Activated T-helper 1 cell treated with anti-CD3 and anti-CD28 coated beads, Interleukin-12 subunit alpha, Interleukin-12 subunit beta, Interleukin-2, Interleukin-4 antibody, amounts not matched to agents 30 ng/mL and 10 ng/mL and 1 ng/mL, durations not matched to agents 14 hours and 24 hours and 36 hours (primary cell): ENCODE measurements at regions of chr15 and their contacts with region 1.

Region 1: DNA sequence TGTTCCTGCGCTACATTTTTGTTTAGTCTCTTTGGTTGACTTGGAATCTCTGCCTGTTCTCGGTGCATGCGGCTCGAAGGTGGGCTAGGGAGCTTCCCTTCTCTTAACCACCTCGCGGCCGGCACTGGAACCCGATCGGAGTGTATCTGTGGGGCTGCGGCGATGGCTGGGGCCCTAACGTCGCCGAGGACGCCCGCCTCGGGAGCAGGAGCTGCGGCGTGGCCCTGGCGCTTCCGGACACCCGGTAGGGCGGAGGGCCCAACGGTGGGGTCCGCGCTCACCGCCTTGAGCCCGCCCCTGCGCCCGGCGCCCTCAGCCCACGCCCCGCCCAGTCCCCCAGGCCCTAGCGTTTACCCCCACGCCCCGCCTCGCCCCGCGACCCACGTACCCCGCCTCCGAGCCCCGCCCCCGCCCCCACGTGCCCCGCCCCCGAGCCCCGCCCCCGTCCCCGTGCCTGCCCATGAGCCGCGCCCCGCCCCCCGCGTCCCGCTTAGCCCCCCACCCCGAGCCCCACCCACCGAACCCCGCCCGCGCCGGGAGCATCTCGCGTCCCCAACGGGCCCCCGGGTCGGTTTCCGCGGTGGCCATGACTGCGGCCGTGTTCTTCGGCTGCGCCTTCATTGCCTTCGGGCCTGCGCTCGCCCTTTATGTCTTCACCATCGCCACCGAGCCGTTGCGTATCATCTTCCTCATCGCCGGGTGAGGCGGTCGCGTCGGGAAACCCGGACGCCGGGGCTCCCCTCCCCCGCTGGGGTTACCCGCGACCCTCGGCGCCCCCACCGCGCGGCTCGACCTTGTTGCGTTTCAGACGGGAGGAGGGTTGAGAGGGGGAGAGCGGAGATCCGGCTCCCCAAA is at the start of gene APH1B:
- DNase-seq: peak; percentile 80
- H3K4me3 Mint-ChIP-seq: peak within 1 kb of the TSS; percentile 89
- H3K27ac Mint-ChIP-seq: peak within 1 kb of the TSS; percentile 92
- H3K4me1 Mint-ChIP-seq: peaks cover 37% of the 10 kb centered on the region
- H3K27me3 Mint-ChIP-seq: no peaks in the 10 kb centered on the region
- total RNA-seq, gene APH1B: 4.1 and 6.2 TPM in 2 replicates

Region 2: DNA sequence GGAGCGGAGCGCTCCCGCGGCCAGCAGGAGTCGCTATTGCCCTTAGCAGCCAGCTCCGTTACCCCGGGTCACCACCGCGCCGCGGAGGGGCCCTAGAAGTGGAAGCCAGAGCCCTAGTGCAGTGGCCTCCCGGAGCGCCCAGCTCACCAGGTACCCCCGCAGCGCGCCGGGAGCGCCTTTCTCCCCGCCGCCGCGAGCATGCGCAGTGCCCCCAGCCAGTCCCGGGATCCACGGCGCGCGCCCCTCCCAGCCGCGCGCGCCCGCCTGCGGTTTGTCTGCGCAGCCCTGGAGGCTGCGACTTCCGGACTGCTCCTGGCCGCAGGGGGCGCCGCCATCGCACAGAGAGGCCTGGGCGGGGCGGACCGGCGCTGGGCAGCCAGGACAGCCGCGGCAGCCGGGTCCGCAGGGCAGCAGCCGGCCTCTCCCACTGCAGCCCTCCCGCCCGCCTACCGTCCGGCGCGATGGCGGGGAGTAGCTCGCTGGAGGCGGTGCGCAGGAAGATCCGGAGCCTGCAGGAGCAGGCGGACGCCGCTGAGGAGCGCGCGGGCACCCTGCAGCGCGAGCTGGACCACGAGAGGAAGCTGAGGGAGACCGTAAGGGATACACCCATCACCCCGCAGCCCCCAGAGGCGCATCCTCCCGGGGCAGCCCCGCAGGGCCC is 229.0 kb before region 1 on chr15:
- intact Hi-C with region 1: loop called (anchors 5 kb)
- DNase-seq: peak; percentile 79
- H3K4me3 Mint-ChIP-seq: peak overlapping the region; percentile 92
- H3K27ac Mint-ChIP-seq: no peak overlapping the region
- H3K4me1 Mint-ChIP-seq: peaks cover 20% of the 10 kb centered on the region
- H3K27me3 Mint-ChIP-seq: peaks cover 55% of the 10 kb centered on the region

Region 3: GRCh38 chr15:63122002-63122893 is 155.0 kb before region 1 on chr15:
- intact Hi-C with region 1: loop called (anchors 5 kb)
- DNase-seq: peak; percentile 83
- H3K4me3 Mint-ChIP-seq: peak overlapping the region; percentile 93
- H3K27ac Mint-ChIP-seq: peak overlapping the region; percentile 83
- H3K4me1 Mint-ChIP-seq: peaks cover 21% of the 10 kb centered on the region
- H3K27me3 Mint-ChIP-seq: no peaks in the 10 kb centered on the region

Region 4: DNA sequence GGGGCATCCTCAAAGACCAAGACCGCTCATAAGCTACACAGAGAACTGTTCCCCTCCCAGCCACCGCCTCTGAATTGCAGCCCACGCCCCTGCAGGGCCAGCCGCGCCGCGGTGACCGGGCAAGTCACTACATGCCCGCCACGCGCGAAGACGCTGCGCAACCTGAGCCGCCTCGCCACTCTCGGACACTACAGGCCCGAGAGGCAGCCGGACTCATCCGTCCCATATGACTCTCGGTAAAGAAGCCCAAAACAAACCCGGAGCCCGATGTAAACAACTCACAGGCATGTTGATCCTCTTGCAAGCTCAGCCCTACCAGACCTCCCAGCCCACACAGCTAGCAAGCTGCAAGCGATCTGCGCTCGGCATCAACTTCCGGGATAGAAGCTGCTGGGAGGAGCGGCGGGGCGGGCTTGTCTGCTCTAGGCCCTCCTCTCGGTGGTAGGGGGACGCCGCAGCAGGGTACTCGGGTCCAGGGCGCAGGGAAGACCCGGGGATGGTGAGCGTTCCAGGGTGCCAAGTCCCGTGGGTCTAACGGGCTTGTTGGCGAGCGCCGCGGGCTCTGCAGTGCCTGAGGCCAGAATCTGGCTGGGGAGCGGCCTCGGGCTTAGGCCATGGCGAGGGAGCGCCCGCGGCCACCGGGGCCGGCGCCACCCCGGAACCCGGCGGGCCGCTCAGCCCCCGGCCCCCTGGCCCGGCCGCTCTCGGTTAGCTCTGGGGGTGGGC is 120.0 kb before region 1 on chr15 and contains the start of gene RPS27L:
- intact Hi-C with region 1: loop called (anchors 2 kb)
- DNase-seq: peak; percentile 86
- H3K4me3 Mint-ChIP-seq: peak within 1 kb of the TSS; percentile 98
- H3K27ac Mint-ChIP-seq: peak within 1 kb of the TSS; percentile 98
- H3K4me1 Mint-ChIP-seq: peaks cover 21% of the 10 kb centered on the region
- H3K27me3 Mint-ChIP-seq: no peaks in the 10 kb centered on the region
- total RNA-seq, gene RPS27L: 163 and 164 TPM in 2 replicates

Region 5: GRCh38 chr15:63238796-63239195 is 38.5 kb before region 1 on chr15:
- intact Hi-C with region 1: loop called (anchors 5 kb)
- DNase-seq: peak; percentile 3
- H3K4me3 Mint-ChIP-seq: no peak overlapping the region
- H3K27ac Mint-ChIP-seq: peak overlapping the region; percentile 23
- H3K4me1 Mint-ChIP-seq: peaks cover 57% of the 10 kb centered on the region
- H3K27me3 Mint-ChIP-seq: peaks cover 2% of the 10 kb centered on the region